Activated CD4-positive, alpha-beta memory T cell treated with anti-CD3 and anti-CD28 coated beads for 36 hours (primary cell): ENCODE measurements at regions of chr2 and their contacts with region 1.

Region 1: DNA sequence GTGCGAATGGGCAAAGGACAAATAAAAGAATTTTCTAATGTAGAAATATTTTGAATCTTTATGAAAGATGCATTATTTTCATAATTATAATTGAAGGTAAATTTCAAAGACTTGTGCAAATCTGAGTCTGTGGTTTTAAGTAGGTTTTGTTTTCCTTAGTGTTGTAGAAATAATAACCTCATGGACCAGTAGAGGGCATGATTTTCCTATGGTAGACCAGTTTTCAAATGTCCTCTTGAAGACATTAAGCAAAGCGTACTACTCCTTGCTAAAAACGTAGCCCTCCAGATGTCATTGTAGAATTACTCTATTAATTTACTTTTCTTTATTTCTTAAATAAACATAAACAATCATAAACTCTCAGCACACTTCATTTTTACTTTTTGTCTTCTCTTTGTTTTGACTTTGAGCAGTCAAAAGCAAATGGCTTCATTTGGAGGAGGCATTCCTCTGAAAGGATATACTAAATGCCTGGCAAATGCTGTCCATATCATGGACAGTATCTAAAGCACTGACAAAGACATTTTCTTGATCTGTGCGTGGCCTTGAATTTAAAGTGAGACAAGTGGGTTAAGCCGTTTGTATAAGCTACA is 85.8 kb upstream of the FAM237A start:
- DNase-seq: no peak
- H3K4me3 Mint-ChIP-seq: no peak overlapping the region
- H3K27ac Mint-ChIP-seq: no peak overlapping the region
- H3K4me1 Mint-ChIP-seq: peaks cover 22% of the 10 kb centered on the region
- H3K27me3 Mint-ChIP-seq: peaks cover 2% of the 10 kb centered on the region

Region 2: GRCh38 chr2:206159346-206160124 is 396.9 kb before region 1 on chr2 and contains the starts of genes EEF1B2 and NDUFS1:
- CTCF ChIA-PET with region 1: no interaction called
- POLR2A ChIA-PET with region 1: no interaction called
- intact Hi-C with region 1: loop called (anchors 10 kb)
- DNase-seq: peak; percentile 98
- H3K4me3 Mint-ChIP-seq: peak within 1 kb of the TSS; percentile 96
- H3K27ac Mint-ChIP-seq: peak within 1 kb of the TSS; percentile 97
- H3K4me1 Mint-ChIP-seq: peaks cover 52% of the 10 kb centered on the region
- H3K27me3 Mint-ChIP-seq: no peaks in the 10 kb centered on the region
- total RNA-seq, gene EEF1B2: 1,180 to 1,194 TPM
- total RNA-seq, gene NDUFS1: 79.2 to 80.8 TPM

Region 3: GRCh38 chr2:206361407-206362045 is 194.9 kb before region 1 on chr2:
- CTCF ChIA-PET with region 1: interaction called, 3 read pairs
- POLR2A ChIA-PET with region 1: no interaction called
- intact Hi-C with region 1: loop called (anchors 10 kb)
- DNase-seq: peak; percentile 50
- H3K4me3 Mint-ChIP-seq: no peak overlapping the region
- H3K27ac Mint-ChIP-seq: no peak overlapping the region
- H3K4me1 Mint-ChIP-seq: peaks cover 11% of the 10 kb centered on the region
- H3K27me3 Mint-ChIP-seq: peaks cover 6% of the 10 kb centered on the region

Region 4: GRCh38 chr2:206616151-206616550 is 59.7 kb after region 1 on chr2:
- CTCF ChIA-PET with region 1: no interaction called
- POLR2A ChIA-PET with region 1: no interaction called
- intact Hi-C with region 1: no loop called
- DNase-seq: no peak
- H3K4me3 Mint-ChIP-seq: no peak overlapping the region
- H3K27ac Mint-ChIP-seq: no peak overlapping the region
- H3K4me1 Mint-ChIP-seq: no peaks in the 10 kb centered on the region
- H3K27me3 Mint-ChIP-seq: no peaks in the 10 kb centered on the region

Region 5: DNA sequence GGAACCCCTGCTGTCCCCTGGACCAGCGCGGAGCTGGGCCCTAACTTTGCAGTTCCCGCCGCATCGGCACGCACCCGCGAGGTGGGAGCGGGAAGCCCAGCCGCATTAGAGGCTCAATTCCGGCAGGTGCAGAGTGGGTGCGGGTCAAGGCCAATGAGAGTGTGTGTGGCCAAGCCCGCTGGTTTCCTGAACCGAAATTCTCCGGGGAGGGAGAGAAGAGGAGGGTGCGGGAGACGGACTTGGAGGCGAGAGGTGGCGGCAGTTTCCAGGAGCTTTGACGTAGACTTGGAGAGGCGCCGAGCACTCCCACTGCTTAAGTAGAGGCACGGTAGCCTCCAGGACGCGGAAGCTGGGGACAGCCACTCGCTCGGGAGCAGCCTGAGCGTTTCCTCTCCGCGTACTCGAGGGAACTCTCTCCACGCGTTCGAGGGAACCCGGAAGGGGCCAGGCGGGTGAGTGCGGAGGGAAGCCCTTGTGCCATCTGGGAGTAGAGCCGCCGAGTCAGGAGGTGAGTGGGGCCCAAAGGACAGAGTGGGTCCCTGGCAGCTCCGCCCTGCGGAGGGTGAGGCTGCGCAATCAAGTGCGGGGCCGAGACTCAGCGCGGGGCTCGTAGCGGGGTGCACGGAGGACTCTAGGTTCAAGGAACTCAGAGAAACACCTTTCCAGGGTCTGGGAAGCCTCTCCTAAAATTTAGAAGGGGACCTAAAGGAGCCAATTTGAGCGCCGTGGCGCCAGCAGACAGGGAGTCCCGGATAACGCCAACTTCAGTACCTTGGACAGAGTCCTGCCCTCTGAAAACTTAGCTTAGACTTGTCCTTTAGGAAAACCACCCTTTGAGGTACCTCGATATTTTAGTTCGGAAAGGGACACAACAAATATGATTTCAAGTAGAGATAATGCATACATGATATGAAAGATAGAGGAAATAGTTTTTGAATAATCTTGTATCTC is 85.9 kb after region 1 on chr2 and contains the start of gene FAM237A:
- CTCF ChIA-PET with region 1: no interaction called
- POLR2A ChIA-PET with region 1: no interaction called
- intact Hi-C with region 1: no loop called
- DNase-seq: peak; percentile 29
- H3K4me3 Mint-ChIP-seq: no peak within 1 kb of the TSS
- H3K27ac Mint-ChIP-seq: no peak within 1 kb of the TSS
- H3K4me1 Mint-ChIP-seq: no peaks in the 10 kb centered on the region
- H3K27me3 Mint-ChIP-seq: peaks cover 18% of the 10 kb centered on the region
- total RNA-seq, gene FAM237A: not detected

Region 6: DNA sequence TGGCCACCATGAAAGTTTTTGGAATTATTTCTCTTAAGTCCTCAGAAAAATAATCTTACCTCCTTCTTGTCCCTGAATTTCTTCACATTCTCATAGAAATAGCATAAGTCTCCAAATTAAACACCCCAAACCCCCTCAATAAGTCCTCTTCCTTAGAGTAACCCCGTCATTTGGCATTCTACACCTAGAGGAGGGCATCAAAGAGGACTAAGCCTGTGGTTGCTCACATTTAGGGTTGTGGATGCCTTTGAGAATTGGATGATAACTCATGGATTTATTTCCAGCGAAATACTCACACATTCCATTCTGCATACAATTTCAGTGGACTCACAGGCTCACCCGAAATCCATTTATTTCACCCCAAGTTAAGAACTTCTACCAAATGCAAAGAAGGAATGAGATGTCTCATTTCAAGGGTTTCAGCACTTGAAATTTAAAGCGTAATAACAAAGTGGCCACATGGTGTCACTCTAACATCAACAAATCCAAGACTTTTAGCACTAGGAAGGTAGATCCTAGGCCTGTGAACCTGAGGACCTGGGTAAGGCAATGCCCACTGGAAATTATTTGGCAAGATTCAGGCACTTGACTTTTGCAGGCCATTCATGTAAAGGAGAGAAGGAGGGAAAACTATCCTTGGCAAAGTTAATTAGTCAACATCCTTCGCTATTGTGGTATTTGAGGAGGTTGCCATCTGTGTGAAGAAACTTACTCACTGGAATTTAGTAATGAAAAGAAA is 137.1 kb after region 1 on chr2:
- CTCF ChIA-PET with region 1: interaction called, 5 read pairs
- POLR2A ChIA-PET with region 1: no interaction called
- intact Hi-C with region 1: loop called (anchors 5 kb)
- DNase-seq: no peak
- H3K4me3 Mint-ChIP-seq: no peak overlapping the region
- H3K27ac Mint-ChIP-seq: no peak overlapping the region
- H3K4me1 Mint-ChIP-seq: peaks cover 3% of the 10 kb centered on the region
- H3K27me3 Mint-ChIP-seq: no peaks in the 10 kb centered on the region

Region 7: GRCh38 chr2:206783718-206784117 is 227.3 kb after region 1 on chr2:
- CTCF ChIA-PET with region 1: interaction called, 6 read pairs
- POLR2A ChIA-PET with region 1: no interaction called
- intact Hi-C with region 1: loop called (anchors 5 kb)
- DNase-seq: no peak
- H3K4me3 Mint-ChIP-seq: no peak overlapping the region
- H3K27ac Mint-ChIP-seq: no peak overlapping the region
- H3K4me1 Mint-ChIP-seq: peaks cover 13% of the 10 kb centered on the region
- H3K27me3 Mint-ChIP-seq: no peaks in the 10 kb centered on the region